Activated CD4-positive, alpha-beta memory T cell treated with anti-CD3 and anti-CD28 coated beads for 36 hours (primary cell): ENCODE measurements at regions of chr10 and their contacts with region 1.

Region 1: DNA sequence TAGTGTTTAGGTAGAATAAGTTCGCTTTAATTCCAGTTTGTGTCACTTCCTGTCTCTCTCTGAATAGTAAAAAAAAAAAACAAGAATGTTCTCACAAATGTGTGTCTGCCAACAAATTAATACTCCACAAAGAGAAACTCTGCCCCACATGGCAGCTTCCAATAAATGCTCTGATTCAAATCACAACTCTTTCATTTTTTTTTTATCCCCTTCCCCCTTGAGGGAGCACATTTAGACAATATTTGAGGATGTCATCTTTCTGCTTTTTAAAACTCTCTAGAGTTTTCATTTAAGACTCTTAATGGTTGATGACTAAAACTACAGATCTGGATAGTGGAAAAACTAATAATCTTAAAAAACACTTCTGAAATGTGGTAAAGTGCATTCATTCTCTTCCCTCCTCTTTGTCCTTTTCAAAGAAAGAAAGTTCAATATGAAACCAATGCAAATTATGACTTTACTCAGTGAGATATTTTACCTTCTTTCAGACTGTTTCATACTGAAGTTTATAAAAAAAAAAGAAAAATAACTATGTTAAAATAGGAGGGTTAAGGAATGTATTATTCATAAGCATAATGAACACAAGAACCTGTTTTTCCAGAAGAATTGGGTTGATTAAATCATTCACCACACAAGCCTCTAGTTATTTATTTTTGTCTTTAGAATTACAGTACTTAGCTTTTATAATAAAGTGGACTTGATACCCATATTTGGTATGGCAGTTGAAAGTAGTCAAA is 42.3 kb downstream of the ARID5B start:
- DNase-seq: peak; percentile 34
- H3K4me3 Mint-ChIP-seq: peak overlapping the region; percentile 70
- H3K27ac Mint-ChIP-seq: peak overlapping the region; percentile 92
- H3K4me1 Mint-ChIP-seq: peaks cover 57% of the 10 kb centered on the region
- H3K27me3 Mint-ChIP-seq: no peaks in the 10 kb centered on the region

Region 2: GRCh38 chr10:61882621-61883373 is 61.0 kb before region 1 on chr10:
- CTCF ChIA-PET with region 1: interaction called, 3 read pairs
- POLR2A ChIA-PET with region 1: no interaction called
- intact Hi-C with region 1: loop called (anchors 1 kb)
- DNase-seq: peak; percentile 84
- H3K4me3 Mint-ChIP-seq: peak overlapping the region; percentile 47
- H3K27ac Mint-ChIP-seq: peak overlapping the region; percentile 77
- H3K4me1 Mint-ChIP-seq: peaks cover 30% of the 10 kb centered on the region
- H3K27me3 Mint-ChIP-seq: no peaks in the 10 kb centered on the region

Region 3: GRCh38 chr10:61921143-61921542 is 22.7 kb before region 1 on chr10:
- CTCF ChIA-PET with region 1: no interaction called
- POLR2A ChIA-PET with region 1: no interaction called
- intact Hi-C with region 1: no loop called
- DNase-seq: no peak
- H3K4me3 Mint-ChIP-seq: no peak overlapping the region
- H3K27ac Mint-ChIP-seq: no peak overlapping the region
- H3K4me1 Mint-ChIP-seq: peaks cover 68% of the 10 kb centered on the region
- H3K27me3 Mint-ChIP-seq: no peaks in the 10 kb centered on the region

Region 4: DNA sequence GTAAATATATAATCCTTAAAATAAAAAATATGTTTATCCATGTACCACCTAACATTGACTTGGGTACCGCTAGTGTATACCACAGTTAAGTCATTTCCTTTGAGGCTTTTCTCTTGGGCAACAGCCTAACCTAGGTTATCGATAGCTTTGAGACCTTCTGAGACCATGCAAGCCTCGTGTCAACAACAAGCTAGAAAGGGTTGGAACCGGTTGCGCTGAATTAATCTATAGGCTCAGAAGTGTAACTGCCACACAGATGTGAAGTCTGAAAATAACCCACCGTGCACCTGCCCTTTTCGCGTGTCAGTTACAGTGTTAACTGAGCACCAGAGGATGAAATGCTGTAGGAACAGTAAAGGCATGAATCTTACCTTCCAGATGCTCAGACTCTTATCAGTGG is 17.4 kb after region 1 on chr10:
- CTCF ChIA-PET with region 1: interaction called, 4 read pairs
- POLR2A ChIA-PET with region 1: interaction called, 13 read pairs
- intact Hi-C with region 1: loop called (anchors 1 kb)
- DNase-seq: peak; percentile 49
- H3K4me3 Mint-ChIP-seq: peak overlapping the region; percentile 24
- H3K27ac Mint-ChIP-seq: peak overlapping the region; percentile 76
- H3K4me1 Mint-ChIP-seq: peaks cover 87% of the 10 kb centered on the region
- H3K27me3 Mint-ChIP-seq: no peaks in the 10 kb centered on the region

Region 5: GRCh38 chr10:61992671-61993668 is 49.1 kb after region 1 on chr10:
- CTCF ChIA-PET with region 1: interaction called, 9 read pairs
- POLR2A ChIA-PET with region 1: interaction called, 33 read pairs
- intact Hi-C with region 1: loop called (anchors 1 kb)
- DNase-seq: peak; percentile 75
- H3K4me3 Mint-ChIP-seq: peak overlapping the region; percentile 57
- H3K27ac Mint-ChIP-seq: peak overlapping the region; percentile 99
- H3K4me1 Mint-ChIP-seq: peaks cover 85% of the 10 kb centered on the region
- H3K27me3 Mint-ChIP-seq: no peaks in the 10 kb centered on the region

Region 6: GRCh38 chr10:62373995-62374861 is 430.4 kb after region 1 on chr10 and contains the start of gene ZNF365:
- CTCF ChIA-PET with region 1: no interaction called
- POLR2A ChIA-PET with region 1: no interaction called
- intact Hi-C with region 1: no loop called
- DNase-seq: peak; percentile 69
- H3K4me3 Mint-ChIP-seq: peak within 1 kb of the TSS; percentile 75
- H3K27ac Mint-ChIP-seq: peak within 1 kb of the TSS; percentile 49
- H3K4me1 Mint-ChIP-seq: peaks cover 15% of the 10 kb centered on the region
- H3K27me3 Mint-ChIP-seq: peaks cover 15% of the 10 kb centered on the region
- total RNA-seq, gene ZNF365: 1.2 to 1.4 TPM

Region 7: DNA sequence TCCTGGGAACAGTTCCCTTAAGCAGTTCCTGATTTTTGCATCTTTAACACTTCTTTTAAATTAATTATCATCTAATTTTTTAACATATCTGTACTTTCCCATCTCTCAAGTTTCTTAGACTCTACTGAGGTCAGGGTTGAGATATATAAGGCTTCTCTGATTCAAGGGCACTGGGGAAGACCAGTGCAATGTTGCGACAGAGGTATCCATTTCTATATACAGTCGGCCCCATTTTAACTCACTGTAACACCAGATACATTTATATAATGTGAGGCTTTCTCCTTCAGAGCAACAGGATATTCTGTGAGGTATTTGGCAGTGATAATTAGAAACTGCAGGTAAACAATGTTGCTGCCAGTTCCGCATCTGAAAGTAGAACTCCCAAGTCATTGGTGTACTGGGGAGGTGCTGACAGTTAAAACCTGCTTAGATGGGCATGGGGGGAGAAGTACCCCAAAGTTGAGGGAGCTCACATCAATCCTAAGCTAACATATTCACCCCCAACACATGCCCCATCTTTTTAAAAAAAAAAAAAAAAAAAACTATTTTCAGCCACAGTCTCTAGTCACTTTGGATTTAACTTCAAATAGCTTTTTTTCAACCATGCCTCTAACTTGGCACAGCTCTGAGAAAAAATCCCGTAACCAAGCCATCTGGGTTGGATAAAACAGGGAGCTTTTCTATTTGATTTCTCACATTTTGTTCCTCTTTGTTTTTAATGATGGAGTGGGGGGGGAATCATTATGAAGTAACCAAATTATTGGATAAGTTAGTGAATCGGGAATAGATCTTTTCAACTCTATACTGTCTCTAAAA is 1640.3 kb after region 1 on chr10:
- CTCF ChIA-PET with region 1: no interaction called
- POLR2A ChIA-PET with region 1: no interaction called
- intact Hi-C with region 1: no loop called
- DNase-seq: no peak
- H3K4me3 Mint-ChIP-seq: no peak overlapping the region
- H3K27ac Mint-ChIP-seq: no peak overlapping the region
- H3K4me1 Mint-ChIP-seq: no peaks in the 10 kb centered on the region
- H3K27me3 Mint-ChIP-seq: no peaks in the 10 kb centered on the region